Activated T-helper 2 cell treated with anti-CD3 and anti-CD28 coated beads, Interferon-gamma antibody, Interleukin-2, Interleukin-4, amounts not matched to agents 10 μg/mL and 5 μg/mL and 100 μg/mL, durations not matched to agents 14 hours and 24 hours and 36 hours (primary cell): ENCODE measurements at regions of chr5 and their contacts with region 1.

Region 1: DNA sequence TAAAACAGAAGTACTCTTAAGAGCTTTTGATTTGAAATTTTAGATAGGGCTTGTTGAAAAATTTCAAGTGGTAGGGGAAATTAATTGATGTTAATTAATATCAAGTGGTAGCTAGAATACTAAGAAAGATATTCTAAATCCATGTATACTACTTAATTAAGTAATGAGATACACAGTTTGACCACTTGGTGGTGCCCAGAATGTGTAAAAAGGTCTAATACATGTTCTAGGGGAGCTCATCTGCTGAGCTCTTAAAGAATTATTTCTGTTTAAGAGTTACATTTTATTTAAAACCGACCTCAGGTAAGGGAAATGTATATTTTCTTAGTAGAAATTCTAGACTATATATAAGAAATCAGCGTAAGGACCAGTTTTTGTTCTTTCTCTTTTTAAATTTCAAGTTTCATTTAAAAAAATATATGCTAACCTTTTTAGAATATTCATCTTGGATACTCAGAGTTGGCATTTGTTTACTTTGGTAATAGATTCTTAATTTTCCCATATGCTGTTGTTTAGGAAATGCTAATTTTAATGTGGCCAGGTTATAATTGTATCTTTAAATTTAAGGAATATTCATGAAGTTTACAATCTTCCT is 61.5 kb downstream of the LNPEP start:
- DNase-seq: no peak
- H3K4me3 Mint-ChIP-seq: no peak overlapping the region
- H3K27ac Mint-ChIP-seq: no peak overlapping the region
- H3K4me1 Mint-ChIP-seq: peaks cover 29% of the 10 kb centered on the region
- H3K27me3 Mint-ChIP-seq: no peaks in the 10 kb centered on the region

Region 2: DNA sequence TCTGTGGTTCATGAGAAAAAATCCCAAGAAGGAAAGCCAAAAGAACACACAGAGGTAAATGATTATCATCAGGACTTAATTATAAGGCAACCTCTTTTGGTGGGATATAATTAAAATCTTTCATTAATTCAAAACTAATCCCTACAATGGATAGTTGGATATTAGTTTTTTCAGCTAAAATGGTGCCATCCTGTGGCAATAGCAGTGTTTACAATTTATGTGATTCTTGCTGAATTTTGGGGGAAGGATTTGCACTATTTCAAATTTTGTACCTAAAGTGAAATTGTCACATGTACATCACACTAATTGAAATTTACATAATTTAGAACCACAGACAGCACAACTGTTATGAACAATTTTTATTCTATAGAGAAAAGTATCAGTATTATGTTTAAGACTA is 268.2 kb before region 1 on chr5:
- intact Hi-C with region 1: no loop called
- DNase-seq: no peak
- H3K4me3 Mint-ChIP-seq: no peak overlapping the region
- H3K27ac Mint-ChIP-seq: no peak overlapping the region
- H3K4me1 Mint-ChIP-seq: no peaks in the 10 kb centered on the region
- H3K27me3 Mint-ChIP-seq: no peaks in the 10 kb centered on the region

Region 3: DNA sequence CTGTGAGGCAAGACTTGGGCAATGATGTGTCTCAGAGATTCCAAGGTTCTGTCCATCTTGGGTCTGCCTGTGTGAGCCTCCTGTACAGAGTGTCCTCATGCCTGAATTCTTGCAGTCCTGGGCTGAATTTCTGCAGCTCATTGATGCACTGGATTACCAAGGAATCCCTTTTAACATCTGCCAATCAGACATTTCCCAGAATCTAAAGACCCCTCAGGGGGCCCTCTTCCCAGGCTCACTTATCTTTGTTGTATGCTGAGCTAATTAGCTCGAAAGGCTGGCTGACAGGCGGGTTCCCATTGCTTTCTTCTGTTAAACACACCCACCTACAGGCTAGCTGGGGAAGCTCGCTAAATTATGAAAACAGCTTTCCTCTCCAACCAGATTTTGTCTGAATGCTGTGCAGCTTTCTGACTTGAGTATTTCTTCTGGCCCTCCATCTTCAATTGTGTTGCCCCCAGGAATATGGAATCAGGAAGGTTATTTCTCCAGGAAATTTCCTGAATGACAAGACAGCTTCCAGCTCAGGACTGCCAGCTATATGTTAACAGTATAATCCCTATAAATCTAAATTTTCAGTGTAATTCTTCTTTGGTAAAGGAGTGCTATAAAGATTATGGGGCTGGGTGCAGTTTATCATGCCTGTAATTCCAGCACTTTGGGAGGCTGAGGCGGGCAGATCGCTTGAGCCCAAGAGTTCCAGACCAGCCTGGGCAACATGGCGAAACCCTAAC is 145.3 kb after region 1 on chr5 and contains the start of gene LIX1:
- intact Hi-C with region 1: loop called (anchors 1 kb)
- DNase-seq: no peak
- H3K4me3 Mint-ChIP-seq: no peak within 1 kb of the TSS
- H3K27ac Mint-ChIP-seq: no peak within 1 kb of the TSS
- H3K4me1 Mint-ChIP-seq: no peaks in the 10 kb centered on the region
- H3K27me3 Mint-ChIP-seq: peaks cover 24% of the 10 kb centered on the region
- total RNA-seq, gene LIX1: not detected in 2 replicates